K562 (cell line): ENCODE measurements at regions of chr3 and their contacts with region 1.

Region 1: DNA sequence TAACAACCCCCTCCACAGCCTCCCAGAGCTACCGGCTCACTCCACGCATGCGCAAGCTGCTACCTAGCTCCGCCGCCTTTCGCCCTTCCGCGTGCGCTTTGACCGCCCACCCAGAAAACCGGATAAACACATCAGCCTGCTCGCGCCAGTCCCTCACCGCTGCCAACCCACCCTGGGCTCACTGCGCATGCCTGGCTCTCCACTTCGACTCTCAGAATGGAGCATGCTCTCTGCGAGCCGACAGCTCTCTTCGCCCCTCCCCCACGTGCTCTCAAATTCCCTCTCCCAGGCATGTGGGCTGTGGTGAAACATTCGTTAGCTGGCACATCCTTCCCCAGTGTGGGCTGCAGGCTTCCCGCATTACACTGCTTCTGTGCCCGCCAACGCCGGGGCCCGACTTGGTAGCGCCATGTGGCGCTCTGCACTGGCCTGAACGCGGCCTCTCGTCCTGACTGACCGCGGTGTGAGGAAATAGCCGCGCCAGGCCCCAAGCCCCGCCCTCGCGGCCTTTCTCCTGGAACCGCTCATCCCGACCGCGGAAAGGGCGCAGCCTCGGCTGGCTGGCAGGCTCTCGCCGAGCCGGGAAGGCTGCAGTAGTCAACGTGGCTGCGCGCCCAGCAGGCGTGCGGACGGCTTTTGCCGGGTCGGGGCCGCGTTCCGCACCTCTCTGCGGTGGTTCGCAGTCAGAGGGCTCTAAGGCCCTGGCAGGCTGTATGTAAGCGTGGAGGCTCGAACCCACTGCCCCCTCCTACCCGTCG is 445 bp upstream of the MSL2 start:
- DNase-seq: peak; percentile 90 to 97 (median 94)
- ATAC-seq: peak; percentile 78
- H3K4me3 ChIP-seq: peak overlapping the region; percentile 76
- H3K27ac ChIP-seq: peak overlapping the region; percentile 99
- H3K4me1 ChIP-seq: peaks cover 3 to 12% of the 10 kb centered on the region in 2 experiments; a peak in 4 of 5 replicates
- H3K27me3 ChIP-seq: no peaks in the 10 kb centered on the region
- CTCF ChIP-seq: peak in 1 of 3 experiments; percentile 10; a peak in 1 of 6 replicates
- EP300 ChIP-seq: no peak
- POLR2A ChIP-seq: peak; percentile 90
- RAD21 ChIP-seq: no peak

Region 2: GRCh38 chr3:135878501-135878900 is 318.1 kb before region 1 on chr3:
- CTCF ChIA-PET with region 1: no interaction called
- POLR2A ChIA-PET with region 1: no interaction called
- in situ Hi-C with region 1: no loop called
- intact Hi-C with region 1: no loop called
- DNase-seq: no peak
- ATAC-seq: no peak
- H3K4me3 ChIP-seq: no peak overlapping the region
- H3K27ac ChIP-seq: no peak overlapping the region
- H3K4me1 ChIP-seq: no peaks in the 10 kb centered on the region
- H3K27me3 ChIP-seq: no peaks in the 10 kb centered on the region
- CTCF ChIP-seq: no peak
- EP300 ChIP-seq: no peak
- POLR2A ChIP-seq: no peak
- RAD21 ChIP-seq: no peak

Region 3: GRCh38 chr3:136008701-136009465 is 187.7 kb before region 1 on chr3:
- CTCF ChIA-PET with region 1: no interaction called
- POLR2A ChIA-PET with region 1: no interaction called
- in situ Hi-C with region 1: no loop called
- intact Hi-C with region 1: no loop called
- DNase-seq: peak in 2 of 4 experiments; percentile 11 to 14
- ATAC-seq: peak; percentile 75
- H3K4me3 ChIP-seq: no peak overlapping the region
- H3K27ac ChIP-seq: no peak overlapping the region
- H3K4me1 ChIP-seq: no peaks in the 10 kb centered on the region
- H3K27me3 ChIP-seq: no peaks in the 10 kb centered on the region
- CTCF ChIP-seq: peak in 2 of 3 experiments; percentile 11 to 13; a peak in 1 of 6 replicates
- EP300 ChIP-seq: no peak
- POLR2A ChIP-seq: no peak
- RAD21 ChIP-seq: no peak

Region 4: DNA sequence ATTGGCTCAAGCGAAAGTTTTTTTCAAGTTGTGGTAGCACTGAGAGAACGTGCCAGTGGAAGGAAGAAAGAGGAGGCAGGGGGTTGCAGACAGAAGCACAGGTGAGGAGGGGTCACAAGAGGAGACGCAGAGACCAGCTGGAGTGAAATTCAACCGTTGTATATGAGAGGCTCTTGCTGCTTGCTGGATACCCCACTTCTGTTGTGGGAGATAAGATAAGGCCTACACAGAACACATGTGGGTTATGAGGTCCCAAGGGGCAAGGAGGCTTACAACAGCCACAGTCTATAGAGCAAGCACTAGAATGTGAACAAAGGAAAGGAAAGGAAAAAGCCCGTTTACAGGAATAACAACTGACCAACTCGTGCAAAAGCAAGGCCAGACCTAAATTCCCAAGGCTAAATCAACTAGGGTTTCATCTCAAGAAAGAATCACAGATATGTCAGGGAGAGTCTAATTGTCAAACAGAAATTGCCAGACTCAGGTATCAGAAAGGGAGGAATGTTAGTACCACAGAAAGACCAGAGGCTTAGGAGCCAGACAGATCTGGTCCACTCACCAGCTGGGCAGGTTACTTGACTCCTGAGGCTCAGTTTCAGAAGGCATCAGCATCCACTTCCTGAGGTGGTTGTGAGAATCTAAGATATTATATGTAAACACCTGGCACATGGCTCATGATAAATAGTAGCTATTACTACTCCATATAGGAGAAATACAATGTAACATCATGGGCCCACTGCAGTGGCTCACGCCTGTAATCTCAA is 61.4 kb before region 1 on chr3:
- CTCF ChIA-PET with region 1: no interaction called
- POLR2A ChIA-PET with region 1: no interaction called
- in situ Hi-C with region 1: no loop called
- intact Hi-C with region 1: no loop called
- DNase-seq: peak; percentile 47 to 84 (median 66)
- ATAC-seq: peak; percentile 96
- H3K4me3 ChIP-seq: no peak overlapping the region; the same call in 1 of the 2 replicates
- H3K27ac ChIP-seq: peak overlapping the region; percentile 81
- H3K4me1 ChIP-seq: peaks cover 6 to 18% of the 10 kb centered on the region in 2 experiments; a peak in 4 of 5 replicates
- H3K27me3 ChIP-seq: no peaks in the 10 kb centered on the region
- CTCF ChIP-seq: no peak
- EP300 ChIP-seq: peak; percentile 89
- POLR2A ChIP-seq: no peak
- RAD21 ChIP-seq: no peak; a peak in 2 of 4 replicates

Region 5: DNA sequence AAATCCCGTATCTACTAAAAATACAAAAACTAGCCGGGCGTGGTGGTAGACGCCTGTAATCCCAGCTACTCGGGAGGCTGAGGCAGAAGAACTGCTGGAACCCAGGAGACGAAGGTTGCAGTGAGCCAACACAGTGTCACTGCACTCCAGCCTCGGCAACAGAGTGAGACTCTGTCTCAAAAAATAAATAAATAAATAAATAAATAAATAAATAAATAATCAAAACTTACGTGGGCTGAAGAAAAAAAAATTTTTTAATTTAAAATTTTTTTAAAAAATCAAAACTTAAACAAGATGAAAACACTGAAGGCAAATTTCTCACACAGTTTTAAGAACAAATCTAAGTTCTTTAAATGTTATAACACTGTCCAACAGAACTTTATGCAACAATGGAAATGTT is 14.8 kb before region 1 on chr3:
- CTCF ChIA-PET with region 1: no interaction called
- POLR2A ChIA-PET with region 1: interaction called, 21 read pairs
- in situ Hi-C with region 1: no loop called
- intact Hi-C with region 1: no loop called
- DNase-seq: no peak
- ATAC-seq: no peak
- H3K4me3 ChIP-seq: no peak overlapping the region
- H3K27ac ChIP-seq: no peak overlapping the region
- H3K4me1 ChIP-seq: peaks cover 10 to 12% of the 10 kb centered on the region in 2 experiments; a peak in 4 of 5 replicates
- H3K27me3 ChIP-seq: no peaks in the 10 kb centered on the region
- CTCF ChIP-seq: no peak
- EP300 ChIP-seq: no peak
- POLR2A ChIP-seq: no peak
- RAD21 ChIP-seq: no peak

Region 6: DNA sequence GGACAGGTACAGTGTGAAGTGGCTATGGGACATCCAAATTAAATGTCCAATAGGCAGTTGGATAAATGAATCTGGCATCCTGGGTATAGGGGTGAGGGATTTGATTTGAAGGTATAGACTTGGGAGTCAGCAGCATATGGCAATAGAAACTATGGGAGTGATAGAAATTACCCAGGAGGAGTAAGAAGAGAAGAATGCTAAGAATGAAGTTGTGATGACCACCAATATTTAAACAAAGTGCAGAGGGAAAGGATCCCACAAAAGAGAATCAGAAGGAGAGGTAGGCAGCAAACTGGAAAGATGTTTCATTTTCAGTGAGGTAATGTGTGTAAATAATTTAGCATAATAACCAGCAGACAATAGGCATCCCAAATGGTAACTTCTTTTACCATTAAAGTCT is 13.3 kb after region 1 on chr3:
- CTCF ChIA-PET with region 1: no interaction called
- POLR2A ChIA-PET with region 1: interaction called, 17 read pairs
- in situ Hi-C with region 1: no loop called
- intact Hi-C with region 1: no loop called
- DNase-seq: no peak
- ATAC-seq: no peak
- H3K4me3 ChIP-seq: no peak overlapping the region
- H3K27ac ChIP-seq: no peak overlapping the region
- H3K4me1 ChIP-seq: peaks cover 0 to 3% of the 10 kb centered on the region in 2 experiments; a peak in 1 of 5 replicates
- H3K27me3 ChIP-seq: no peaks in the 10 kb centered on the region; a peak in 1 of 5 replicates
- CTCF ChIP-seq: no peak
- EP300 ChIP-seq: no peak
- POLR2A ChIP-seq: no peak
- RAD21 ChIP-seq: no peak

Region 7: GRCh38 chr3:136250226-136250902 is 53.8 kb after region 1 on chr3 and contains the start of gene PCCB:
- CTCF ChIA-PET with region 1: no interaction called
- POLR2A ChIA-PET with region 1: interaction called, 4 read pairs
- in situ Hi-C with region 1: no loop called
- intact Hi-C with region 1: loop called (anchors 2 kb)
- DNase-seq: peak; percentile 84 to 92 (median 88)
- ATAC-seq: peak; percentile 97
- H3K4me3 ChIP-seq: peak within 1 kb of the TSS; percentile 58
- H3K27ac ChIP-seq: peak within 1 kb of the TSS; percentile 97
- H3K4me1 ChIP-seq: peaks cover 14 to 20% of the 10 kb centered on the region in 2 experiments; a peak in 4 of 5 replicates
- H3K27me3 ChIP-seq: no peaks in the 10 kb centered on the region
- CTCF ChIP-seq: peak; percentile 48 to 60 (median 53)
- EP300 ChIP-seq: no peak
- POLR2A ChIP-seq: peak; percentile 92
- RAD21 ChIP-seq: peak; percentile 16; a peak in 1 of 4 replicates
- polyA plus RNA-seq, gene PCCB: 69.5 to 83.7 TPM